Posterior vena cava (tissue), 2 donors: ENCODE measurements at regions of chr1 and their contacts with region 1.

Region 1: DNA sequence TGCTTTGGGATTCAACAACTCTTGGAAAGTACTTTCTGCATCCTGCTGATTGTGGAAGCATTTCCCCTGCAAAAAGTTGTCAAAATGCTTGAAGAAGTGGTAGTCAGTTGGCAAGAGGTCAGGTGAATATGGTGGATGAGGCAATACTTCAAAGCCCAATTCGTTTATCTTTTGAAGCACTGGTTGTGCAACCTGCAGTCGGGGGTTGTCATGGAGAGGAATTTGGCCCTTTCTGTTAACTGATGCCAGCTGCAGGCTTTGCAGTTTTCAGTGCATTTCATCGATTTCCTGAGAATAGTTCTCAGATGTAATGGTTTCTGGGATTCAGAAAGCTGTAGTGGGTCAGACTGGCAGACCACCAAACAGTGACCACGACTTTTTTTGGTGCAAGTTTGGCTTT is 47.6 kb upstream of the GJA5 start:
- DNase-seq: no peak

Region 2: GRCh38 chr1:147748676-147749350 is 59.2 kb before region 1 on chr1:
- intact Hi-C with region 1: loop called in 1 of 2 experiments (anchors 10 kb)
- DNase-seq: no peak

Region 3: GRCh38 chr1:147919896-147920295 is 111.9 kb after region 1 on chr1:
- intact Hi-C with region 1: no loop called
- DNase-seq: no peak